ENCODE measurements at regions of chr5 and their contacts with region 1.

Region 1: GRCh38 chr5:119274767-119275130 is 81.1 kb upstream of the TNFAIP8 start:
- DNase-seq: no peak
- ATAC-seq: peak in 1 of 2 donors; percentile 67
- H3K4me3 ChIP-seq: no peak overlapping the region
- H3K27ac ChIP-seq: no peak overlapping the region
- H3K4me1 ChIP-seq: peaks cover 11% of the 10 kb centered on the region
- H3K27me3 ChIP-seq: no peaks in the 10 kb centered on the region

Region 2: DNA sequence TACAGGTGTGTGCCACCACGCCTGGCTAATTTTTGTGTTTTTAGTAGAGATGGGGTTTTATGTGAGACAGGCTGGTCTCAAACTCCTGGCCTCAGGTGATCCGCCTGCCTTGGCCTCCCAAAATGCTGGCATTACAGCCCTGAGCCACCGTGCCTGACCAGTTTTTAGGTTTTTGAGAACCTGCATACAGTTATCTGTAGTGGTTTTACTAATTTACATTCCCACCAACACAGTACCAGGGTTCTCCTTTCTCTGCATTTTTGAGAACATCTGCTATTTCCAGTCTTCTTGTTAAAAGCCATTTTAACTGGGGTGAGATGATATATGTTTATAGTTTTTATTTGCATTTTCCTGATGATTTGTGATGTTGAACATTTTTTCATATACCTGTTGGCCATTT is 191.1 kb before region 1 on chr5:
- intact Hi-C with region 1: no loop called
- DNase-seq: no peak
- ATAC-seq: no peak
- H3K4me3 ChIP-seq: no peak overlapping the region
- H3K27ac ChIP-seq: no peak overlapping the region
- H3K4me1 ChIP-seq: no peaks in the 10 kb centered on the region
- H3K27me3 ChIP-seq: no peaks in the 10 kb centered on the region

Region 3: GRCh38 chr5:119131530-119132313 is 143.0 kb before region 1 on chr5:
- intact Hi-C with region 1: no loop called
- DNase-seq: no peak
- ATAC-seq: no peak
- H3K4me3 ChIP-seq: no peak overlapping the region
- H3K27ac ChIP-seq: no peak overlapping the region
- H3K4me1 ChIP-seq: no peaks in the 10 kb centered on the region
- H3K27me3 ChIP-seq: no peaks in the 10 kb centered on the region

Region 4: GRCh38 chr5:119336845-119337580 is 62.3 kb after region 1 on chr5:
- intact Hi-C with region 1: loop called in 1 of 4 experiments (anchors 5 kb)
- DNase-seq: no peak
- ATAC-seq: no peak
- H3K4me3 ChIP-seq: no peak overlapping the region
- H3K27ac ChIP-seq: no peak overlapping the region
- H3K4me1 ChIP-seq: peaks cover 3% of the 10 kb centered on the region
- H3K27me3 ChIP-seq: no peaks in the 10 kb centered on the region

Measured in right cardiac atrium (tissue), 5 donors.